Pancreas (tissue), 10 donors: ENCODE measurements at regions of chr2 and their contacts with region 1.

Region 1: DNA sequence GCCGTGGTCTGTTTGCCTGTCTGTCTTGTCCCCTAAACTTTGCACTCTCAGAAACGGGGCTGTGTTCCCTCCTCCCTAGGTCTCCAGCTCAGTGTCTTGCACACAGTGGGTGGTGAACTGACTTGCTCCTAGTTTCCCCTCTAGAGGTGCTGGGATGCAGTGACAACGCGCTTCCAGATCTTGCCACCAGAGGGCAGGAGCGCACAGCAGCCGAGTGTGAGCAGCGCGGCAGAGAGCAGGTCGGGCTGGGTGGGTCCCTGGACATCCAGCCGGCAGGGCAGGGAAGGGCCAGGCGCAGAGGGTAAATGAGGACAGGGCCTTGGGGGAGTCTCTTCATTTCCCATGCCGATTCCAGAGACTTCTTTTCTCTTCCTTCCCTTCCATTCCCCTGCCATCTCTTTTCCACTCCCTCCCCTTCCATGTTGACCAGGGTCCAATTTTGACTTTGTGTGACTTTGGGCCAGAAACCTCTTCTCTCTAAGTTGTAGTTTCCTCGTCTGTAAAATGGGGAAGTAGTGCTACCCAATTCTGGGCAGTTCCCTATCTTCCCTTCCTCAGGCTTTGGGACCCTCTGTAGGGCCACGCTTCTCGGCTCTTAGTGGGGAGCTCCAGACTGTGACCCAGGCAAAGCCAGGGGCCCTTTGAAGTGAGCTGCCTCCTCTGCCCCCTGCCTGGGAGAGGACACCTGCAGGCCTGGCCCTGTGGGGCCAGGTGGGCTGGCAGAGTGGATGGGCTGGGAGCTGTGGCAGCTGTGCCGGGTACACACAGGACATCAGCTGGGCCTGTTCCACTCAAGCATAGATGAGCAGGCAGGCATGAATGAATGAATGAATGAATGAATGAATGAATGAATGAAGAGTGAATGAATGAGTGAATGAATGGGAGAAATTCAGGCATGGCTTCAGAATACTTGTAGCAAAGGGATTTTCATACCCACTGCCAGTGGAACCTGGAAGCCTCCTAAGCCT is 43.3 kb upstream of the TAF1B start:
- DNase-seq: peak; percentile 66 to 97 (median 84)
- ATAC-seq: peak; percentile 74 to 89 (median 87)
- H3K4me3 ChIP-seq: no peak overlapping the region
- H3K27ac ChIP-seq: no peak overlapping the region
- H3K4me1 ChIP-seq: peaks cover 0 to 8% (median 0%) of the 10 kb centered on the region in 3 donors
- H3K27me3 ChIP-seq: no peaks in the 10 kb centered on the region
- CTCF ChIP-seq: peak; percentile 89 to 97 (median 94)

Region 2: DNA sequence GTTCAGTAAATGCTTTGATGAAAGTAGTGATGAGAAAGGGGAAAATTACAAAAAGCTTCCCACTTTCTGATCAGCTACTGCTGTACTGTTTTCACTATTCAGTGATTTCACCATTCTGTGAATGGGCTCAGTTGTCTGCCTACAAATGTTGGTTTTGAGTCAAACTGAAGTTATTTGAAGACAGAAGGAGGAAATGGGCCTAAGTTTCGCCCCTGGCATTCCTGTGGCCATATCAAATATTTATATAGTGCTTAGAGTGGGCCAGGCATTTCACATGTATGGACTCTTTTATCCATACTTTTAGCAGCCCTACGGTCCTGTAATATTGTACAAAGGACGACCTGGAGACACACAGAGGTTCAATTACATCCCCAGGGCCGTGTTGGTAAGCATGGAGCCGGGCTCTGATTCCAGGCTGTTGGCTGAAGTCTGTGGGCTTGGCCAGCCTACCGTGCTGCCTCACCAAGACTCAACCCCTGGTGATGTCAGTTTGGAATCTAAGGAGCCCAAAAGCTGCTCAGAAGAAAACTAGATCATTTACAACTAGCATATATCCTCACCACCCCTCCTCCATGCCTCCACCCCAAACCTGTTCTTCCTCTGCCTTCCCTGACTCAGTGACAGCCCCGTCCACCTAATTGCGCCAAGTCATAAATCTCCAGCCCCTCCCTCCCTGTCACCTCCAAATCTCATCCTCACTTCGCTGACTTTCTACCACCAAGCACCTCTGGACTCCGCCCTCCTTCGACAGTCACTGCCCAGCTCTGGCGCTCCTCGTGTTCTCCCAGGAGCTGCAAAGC is 141.4 kb after region 1 on chr2:
- intact Hi-C with region 1: loop called in 1 of 3 experiments (anchors 10 kb)
- DNase-seq: no peak
- ATAC-seq: no peak
- H3K4me3 ChIP-seq: no peak overlapping the region
- H3K27ac ChIP-seq: no peak overlapping the region
- H3K4me1 ChIP-seq: peaks cover 0 to 11% (median 8%) of the 10 kb centered on the region in 3 donors
- H3K27me3 ChIP-seq: no peaks in the 10 kb centered on the region
- CTCF ChIP-seq: no peak

Region 3: DNA sequence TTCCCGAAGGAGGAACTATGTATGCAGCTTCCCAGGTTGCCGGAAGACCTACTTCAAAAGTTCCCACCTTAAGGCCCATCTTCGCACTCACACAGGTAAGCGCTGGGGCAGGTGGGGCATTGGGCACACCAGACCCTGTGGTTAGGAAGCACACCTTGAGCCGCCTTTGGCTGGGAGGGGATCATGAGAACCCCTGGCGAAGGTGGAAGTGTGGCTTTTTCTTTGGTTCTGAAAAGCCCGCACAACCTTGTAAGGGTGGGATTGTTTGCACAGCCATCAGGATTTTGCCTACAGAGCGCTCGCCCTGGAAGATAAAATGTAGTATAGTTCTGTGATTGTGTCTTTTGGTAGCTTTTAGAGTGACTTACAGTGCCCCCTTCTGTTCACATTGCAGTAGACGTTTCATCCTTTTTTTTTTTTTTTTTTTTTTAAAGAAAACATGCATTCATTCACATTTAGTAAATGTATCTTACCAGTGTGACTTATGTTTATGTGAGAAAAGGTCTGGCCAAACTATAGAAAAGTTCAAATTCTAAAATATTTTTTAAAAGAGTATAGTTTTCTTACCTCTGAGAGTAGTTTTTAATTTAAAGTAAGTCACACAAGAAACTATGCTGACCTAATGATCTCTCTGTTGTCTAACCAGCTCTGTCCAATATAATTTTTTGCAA is 248.7 kb after region 1 on chr2:
- intact Hi-C with region 1: loop called in 2 of 3 experiments (anchors 5 to 10 kb)
- DNase-seq: peak in 3 of 6 donors; percentile 21 to 48 (median 31)
- ATAC-seq: peak in 2 of 4 donors; percentile 9 to 22
- H3K4me3 ChIP-seq: peak overlapping the region in 1 of 4 donors; percentile 22
- H3K27ac ChIP-seq: peak overlapping the region in 1 of 4 donors; percentile 10
- H3K4me1 ChIP-seq: peaks cover 35 to 43% (median 40%) of the 10 kb centered on the region in 3 donors
- H3K27me3 ChIP-seq: no peaks in the 10 kb centered on the region
- CTCF ChIP-seq: peak in 3 of 4 donors; percentile 42 to 49 (median 46)

Region 4: GRCh38 chr2:10057231-10058107 is 257.5 kb after region 1 on chr2:
- intact Hi-C with region 1: loop called in 1 of 3 experiments (anchors 10 kb)
- DNase-seq: peak in 3 of 6 donors; percentile 54 to 76 (median 59)
- ATAC-seq: peak in 3 of 4 donors; percentile 18 to 70 (median 46)
- H3K4me3 ChIP-seq: no peak overlapping the region
- H3K27ac ChIP-seq: peak overlapping the region; percentile 5 to 45 (median 36)
- H3K4me1 ChIP-seq: peaks cover 7 to 18% (median 16%) of the 10 kb centered on the region in 3 donors
- H3K27me3 ChIP-seq: no peaks in the 10 kb centered on the region
- CTCF ChIP-seq: no peak